Activated CD4-positive, alpha-beta memory T cell treated with anti-CD3 and anti-CD28 coated beads, Interleukin-2, amount 10 ng/mL, durations not matched to agents 7 days and 5 days (primary cell): ENCODE measurements at regions of chr7 and their contacts with region 1.

Region 1: DNA sequence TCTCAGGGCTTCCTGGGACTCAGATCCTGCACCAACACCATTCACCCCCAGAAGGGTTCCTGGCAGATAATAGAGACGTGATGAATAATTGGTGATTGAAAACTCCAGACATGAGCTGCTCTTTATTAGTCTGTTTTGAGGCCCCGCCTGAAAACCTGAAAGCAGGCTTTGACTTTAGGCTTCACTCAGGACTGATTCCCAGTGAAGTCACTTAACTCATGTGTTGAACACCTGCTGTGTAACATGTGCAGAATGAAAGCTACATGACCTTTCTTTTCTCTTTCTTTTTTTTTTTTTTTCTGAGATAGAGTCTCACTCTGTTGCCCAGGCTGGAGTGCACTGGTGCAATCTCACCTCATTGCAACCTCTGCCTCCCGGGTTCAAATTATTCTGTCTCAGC is 8.9 kb downstream of the SPACDR start:
- DNase-seq: no peak
- H3K4me3 Mint-ChIP-seq: no peak overlapping the region
- H3K27ac Mint-ChIP-seq: no peak overlapping the region
- H3K4me1 Mint-ChIP-seq: peaks cover 20% of the 10 kb centered on the region
- H3K27me3 Mint-ChIP-seq: no peaks in the 10 kb centered on the region

Region 2: DNA sequence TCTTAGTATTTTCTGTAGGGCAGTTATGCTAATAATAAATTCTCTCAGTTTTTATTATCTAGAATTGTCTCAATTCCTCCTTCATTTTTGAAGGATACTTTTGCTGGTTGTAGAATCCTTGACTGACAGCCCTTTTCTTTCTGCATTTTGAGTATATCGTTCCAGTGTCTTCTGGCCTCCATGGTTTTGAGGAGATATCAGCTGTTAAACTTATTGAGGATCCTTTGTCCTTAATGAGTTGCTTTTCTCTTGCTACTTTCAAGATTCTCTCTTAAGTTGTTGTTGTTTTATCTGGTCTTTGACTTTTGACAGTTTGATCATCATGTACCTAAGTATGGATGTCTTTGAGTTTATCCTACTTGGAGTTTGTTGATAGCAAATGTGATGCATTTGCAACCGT is 516.9 kb before region 1 on chr7:
- CTCF ChIA-PET with region 1: no interaction called
- POLR2A ChIA-PET with region 1: no interaction called
- DNase-seq: no peak
- H3K4me3 Mint-ChIP-seq: no peak overlapping the region
- H3K27ac Mint-ChIP-seq: no peak overlapping the region
- H3K4me1 Mint-ChIP-seq: peaks cover 10% of the 10 kb centered on the region
- H3K27me3 Mint-ChIP-seq: peaks cover 43% of the 10 kb centered on the region

Region 3: DNA sequence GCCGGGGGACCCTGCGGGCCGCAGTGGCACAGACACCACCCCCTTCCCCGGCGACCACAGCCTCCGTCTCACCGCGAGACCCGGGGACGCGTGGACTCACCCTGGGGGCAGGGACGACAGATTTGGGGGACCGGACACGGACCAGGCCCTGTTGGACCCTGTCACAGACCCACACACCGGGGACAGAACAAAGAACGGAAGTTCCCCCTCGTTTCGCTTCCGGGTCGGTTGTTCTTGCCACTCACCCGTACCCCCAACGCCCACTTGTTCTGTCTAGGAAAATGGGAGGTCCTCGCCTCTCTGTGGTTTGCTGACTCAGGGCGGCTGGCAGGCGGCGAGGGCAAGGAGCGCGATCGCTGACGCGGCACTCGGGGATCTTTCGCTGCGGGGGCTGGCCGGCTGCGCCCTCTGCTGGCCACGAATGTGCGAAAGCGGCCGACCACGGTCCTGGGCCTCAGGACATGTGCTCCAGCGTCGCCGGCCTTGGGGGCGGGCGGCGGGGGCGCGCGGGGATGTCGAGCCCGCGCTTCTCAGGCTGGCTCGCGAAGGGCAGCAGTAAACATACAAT is 373.6 kb before region 1 on chr7 and contains the start of gene ZNF3:
- CTCF ChIA-PET with region 1: no interaction called
- POLR2A ChIA-PET with region 1: no interaction called
- DNase-seq: peak; percentile 98
- H3K4me3 Mint-ChIP-seq: peak within 1 kb of the TSS; percentile 81
- H3K27ac Mint-ChIP-seq: peak within 1 kb of the TSS; percentile 79
- H3K4me1 Mint-ChIP-seq: peaks cover 33% of the 10 kb centered on the region
- H3K27me3 Mint-ChIP-seq: peaks cover 3% of the 10 kb centered on the region
- total RNA-seq, gene ZNF3: 21.1 to 22.1 TPM

Region 4: GRCh38 chr7:100469227-100470044 is 14.2 kb after region 1 on chr7:
- CTCF ChIA-PET with region 1: interaction called, 11 read pairs
- POLR2A ChIA-PET with region 1: no interaction called
- DNase-seq: peak; percentile 83
- H3K4me3 Mint-ChIP-seq: no peak overlapping the region
- H3K27ac Mint-ChIP-seq: peak overlapping the region; percentile 26
- H3K4me1 Mint-ChIP-seq: peaks cover 24% of the 10 kb centered on the region
- H3K27me3 Mint-ChIP-seq: no peaks in the 10 kb centered on the region

Region 5: GRCh38 chr7:100489824-100490223 is 34.6 kb after region 1 on chr7:
- CTCF ChIA-PET with region 1: no interaction called
- POLR2A ChIA-PET with region 1: no interaction called
- DNase-seq: peak; percentile 42
- H3K4me3 Mint-ChIP-seq: no peak overlapping the region
- H3K27ac Mint-ChIP-seq: no peak overlapping the region
- H3K4me1 Mint-ChIP-seq: peaks cover 13% of the 10 kb centered on the region
- H3K27me3 Mint-ChIP-seq: peaks cover 8% of the 10 kb centered on the region